Caco-2 (cell line): ENCODE measurements at regions of chr21 and their contacts with region 1.

Region 1: GRCh38 chr21:43712308-43712974 is 6.5 kb upstream of the PDXK start:
- DNase-seq: peak; percentile 91 to 96
- H3K4me3 ChIP-seq: peak overlapping the region; percentile 29
- H3K4me3 Mint-ChIP-seq: peak overlapping the region; percentile 66
- H3K27ac Mint-ChIP-seq: peak overlapping the region; percentile 99
- H3K4me1 ChIP-seq: peaks cover 39% of the 10 kb centered on the region
- H3K4me1 Mint-ChIP-seq: peaks cover 24% of the 10 kb centered on the region
- H3K27me3 ChIP-seq: no peaks in the 10 kb centered on the region
- H3K27me3 Mint-ChIP-seq: no peaks in the 10 kb centered on the region
- CTCF ChIP-seq: no peak

Region 2: DNA sequence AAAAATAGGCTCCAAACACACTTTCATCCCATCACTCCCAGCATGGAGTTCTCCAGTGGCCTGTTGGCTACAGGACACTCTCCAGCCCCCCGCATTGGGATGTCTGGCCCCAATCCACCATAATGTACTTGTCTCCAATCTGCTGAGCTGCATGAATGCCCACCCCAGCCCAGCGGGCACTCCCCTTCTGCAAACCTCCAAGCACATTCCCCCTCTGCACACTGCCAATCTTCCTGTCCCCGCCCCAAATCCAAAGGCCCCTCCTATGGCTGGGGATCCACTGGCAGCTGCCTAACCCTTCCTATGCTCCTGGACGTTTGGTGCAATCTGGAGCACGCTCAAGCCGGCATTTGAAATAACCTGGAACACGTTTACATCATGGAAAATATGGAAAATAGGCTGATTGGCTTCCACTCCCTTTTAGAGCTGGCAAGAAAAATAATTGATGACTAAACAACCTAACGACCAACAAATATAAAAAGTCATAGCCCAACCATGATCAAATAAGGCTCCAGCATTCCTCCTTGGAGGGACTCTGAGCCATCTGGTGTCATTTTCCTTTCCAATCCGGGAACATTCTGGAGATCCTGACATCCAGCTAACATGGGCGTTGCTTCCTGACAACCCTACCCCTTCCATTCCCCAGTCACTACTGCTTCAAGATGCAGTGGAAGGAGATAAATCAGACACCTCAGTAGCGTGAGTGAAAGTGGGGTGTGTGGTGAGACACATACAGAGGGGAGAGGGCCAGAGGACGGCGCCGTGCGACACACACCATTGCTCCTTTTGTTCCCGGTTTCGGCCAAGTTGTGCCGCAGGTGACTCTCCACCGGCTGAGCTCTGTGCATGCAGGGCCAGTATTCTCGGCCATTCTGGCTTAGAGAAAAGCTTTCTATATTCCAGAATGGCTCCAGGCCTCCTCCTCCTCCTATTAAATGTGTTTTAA is 1017.4 kb before region 1 on chr21:
- CTCF ChIA-PET with region 1: no interaction called
- POLR2A ChIA-PET with region 1: no interaction called
- intact Hi-C with region 1: loop called (anchors 5 kb)
- DNase-seq: no peak
- H3K4me3 ChIP-seq: no peak overlapping the region
- H3K4me3 Mint-ChIP-seq: no peak overlapping the region
- H3K27ac Mint-ChIP-seq: no peak overlapping the region
- H3K4me1 ChIP-seq: no peaks in the 10 kb centered on the region
- H3K4me1 Mint-ChIP-seq: no peaks in the 10 kb centered on the region
- H3K27me3 ChIP-seq: no peaks in the 10 kb centered on the region
- H3K27me3 Mint-ChIP-seq: no peaks in the 10 kb centered on the region
- CTCF ChIP-seq: no peak

Region 3: DNA sequence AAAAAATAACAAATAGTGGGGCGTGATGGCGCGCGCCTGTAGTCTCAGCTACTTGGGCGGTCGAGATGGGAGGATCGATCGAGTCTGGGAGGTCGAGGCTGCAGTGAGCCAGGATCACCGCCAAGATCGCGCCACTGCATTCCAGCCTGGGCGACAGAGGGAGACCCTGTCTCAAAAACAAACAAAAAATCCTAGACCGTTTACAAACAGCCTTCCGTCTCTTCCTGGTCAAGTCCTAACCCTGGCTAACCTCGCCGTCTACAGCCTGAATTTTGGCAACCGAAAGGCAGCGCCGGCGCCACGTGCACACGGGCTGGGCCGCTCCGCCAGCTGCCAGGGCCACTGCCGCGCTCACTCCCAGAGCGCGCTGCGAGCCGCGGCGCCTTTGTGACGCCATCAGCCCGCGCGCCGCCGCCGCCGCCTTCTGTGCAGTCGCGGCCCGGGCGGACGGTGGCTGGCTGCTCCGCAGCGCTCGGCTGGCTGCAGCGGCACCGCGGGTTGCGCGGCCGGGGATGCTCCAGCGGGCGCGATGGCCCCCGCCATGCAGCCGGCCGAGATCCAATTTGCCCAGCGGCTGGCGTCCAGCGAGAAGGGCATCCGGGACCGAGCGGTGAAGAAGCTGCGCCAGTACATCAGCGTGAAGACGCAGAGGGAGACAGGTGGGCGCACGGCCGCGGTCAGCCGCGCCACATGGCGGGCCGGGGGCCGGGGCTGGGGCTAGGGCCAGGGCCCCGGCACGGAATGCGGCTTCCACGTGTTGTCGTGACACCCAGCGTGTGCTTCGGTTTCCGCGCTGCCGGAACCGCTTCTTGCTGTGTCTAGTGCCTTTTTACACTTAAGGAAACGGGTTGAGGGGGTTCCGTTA is 53.1 kb before region 1 on chr21 and contains the starts of genes HSF2BP and RRP1B:
- CTCF ChIA-PET with region 1: no interaction called
- POLR2A ChIA-PET with region 1: no interaction called
- intact Hi-C with region 1: loop called (anchors 2 kb)
- DNase-seq: peak; percentile 74 to 89
- H3K4me3 ChIP-seq: peak within 1 kb of the TSS; percentile 85
- H3K4me3 Mint-ChIP-seq: peak within 1 kb of the TSS; percentile 87
- H3K27ac Mint-ChIP-seq: peak within 1 kb of the TSS; percentile 95
- H3K4me1 ChIP-seq: peaks cover 10% of the 10 kb centered on the region
- H3K4me1 Mint-ChIP-seq: peaks cover 19% of the 10 kb centered on the region
- H3K27me3 ChIP-seq: no peaks in the 10 kb centered on the region
- H3K27me3 Mint-ChIP-seq: no peaks in the 10 kb centered on the region
- CTCF ChIP-seq: no peak
- total RNA-seq, gene HSF2BP: 10.9 and 11.9 TPM in 2 replicates
- total RNA-seq, gene RRP1B: 49.5 and 52.3 TPM in 2 replicates